WTC11 (cell line): ENCODE measurements at regions of chr2 and their contacts with region 1.

Region 1: DNA sequence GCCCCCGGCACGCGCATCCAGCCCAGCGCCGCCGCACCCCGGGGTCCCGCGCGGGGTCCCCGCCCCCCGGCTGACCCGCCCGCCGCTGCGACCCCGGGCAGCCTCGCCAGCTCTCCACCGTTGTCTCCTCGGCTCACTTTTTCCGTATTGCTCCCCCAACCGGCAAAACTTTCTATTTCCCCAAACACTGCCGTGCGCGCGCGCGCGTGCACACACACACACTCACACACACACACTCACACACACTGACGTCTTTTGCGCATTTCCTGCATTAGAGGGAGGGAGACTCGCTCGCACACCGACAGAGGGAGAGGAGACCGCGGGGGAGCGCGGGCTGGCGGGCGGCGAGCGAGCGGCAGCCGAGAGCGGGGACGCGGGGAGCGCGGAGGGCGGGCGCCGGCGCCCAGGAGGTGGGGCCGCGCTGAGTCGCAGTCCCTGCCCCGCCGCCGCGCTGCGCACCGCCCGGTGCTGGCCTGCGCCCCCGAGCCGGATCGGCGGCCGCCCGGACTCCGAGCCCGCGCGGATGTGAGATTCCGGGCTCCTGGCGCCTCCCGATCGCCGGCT is 542 bp upstream of the PRKCE start:
- DNase-seq: peak; percentile 82
- ATAC-seq: peak; percentile 69
- H3K4me3 Mint-ChIP-seq: peak overlapping the region; percentile 98
- H3K27ac Mint-ChIP-seq: peak overlapping the region; percentile 63; the same call in 1 of the 2 replicates
- H3K4me1 Mint-ChIP-seq: peaks cover 16% of the 10 kb centered on the region
- H3K27me3 Mint-ChIP-seq: peaks cover 79% of the 10 kb centered on the region
- CTCF ChIP-seq: no peak

Region 2: DNA sequence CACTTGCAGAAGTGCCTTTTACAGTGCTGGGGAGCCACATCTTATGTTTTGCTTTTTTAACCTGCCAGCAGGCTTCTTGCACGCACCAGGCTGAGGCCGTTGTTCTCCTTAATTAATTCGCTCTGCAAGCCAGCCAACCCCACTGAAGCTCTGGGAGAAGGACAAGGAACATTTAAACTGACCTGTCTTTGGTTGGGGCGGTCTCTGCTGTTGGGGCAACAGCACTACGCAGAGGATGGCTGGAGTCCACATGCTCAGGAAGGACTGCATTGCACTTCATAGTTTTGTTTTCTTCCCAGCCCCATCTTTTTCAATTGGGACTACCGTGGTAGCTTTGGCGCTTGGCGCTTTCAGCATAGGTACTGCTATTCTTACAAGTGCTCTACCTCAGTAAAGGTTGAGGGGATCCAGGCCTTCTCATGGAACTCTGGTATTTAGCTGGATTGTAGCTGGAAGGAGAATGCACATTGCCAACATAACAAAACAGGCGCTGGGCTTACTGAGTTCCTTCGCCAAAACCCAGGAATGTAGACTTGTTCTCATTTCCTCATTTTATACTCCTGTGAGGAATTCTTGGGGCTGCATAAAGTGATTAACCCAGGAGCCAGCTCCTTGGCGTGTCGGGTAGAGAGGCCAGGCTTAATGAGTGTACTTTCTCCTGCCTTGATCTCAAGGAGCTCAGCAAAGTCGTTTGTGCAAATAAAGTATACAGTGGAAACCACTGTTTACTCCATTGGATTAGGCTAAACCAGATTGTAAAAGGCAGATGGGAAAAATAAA is 146.7 kb after region 1 on chr2:
- CTCF ChIA-PET with region 1: interaction called, 10 read pairs
- POLR2A ChIA-PET with region 1: no interaction called
- DNase-seq: no peak
- ATAC-seq: peak; percentile 59
- H3K4me3 Mint-ChIP-seq: no peak overlapping the region
- H3K27ac Mint-ChIP-seq: no peak overlapping the region
- H3K4me1 Mint-ChIP-seq: 0 out of 2 replicates have a peak, but pooled peaks cover 6% of the 10 kb centered on the region
- H3K27me3 Mint-ChIP-seq: no peaks in the 10 kb centered on the region
- CTCF ChIP-seq: no peak